CD4-positive, alpha-beta T cell (primary cell): ENCODE measurements at regions of chr4 and their contacts with region 1.

Region 1: GRCh38 chr4:119286377-119287002 is 35.4 kb downstream of the FABP2 start:
- DNase-seq: peak in 10 of 14 experiments; percentile 3 to 74 (median 17)
- ATAC-seq: peak; percentile 55
- H3K4me3 ChIP-seq: no peak overlapping the region
- H3K4me3 Mint-ChIP-seq: no peak overlapping the region
- H3K27ac ChIP-seq: no peak overlapping the region
- H3K27ac Mint-ChIP-seq: no peak overlapping the region
- H3K4me1 ChIP-seq: no peaks in the 10 kb centered on the region
- H3K4me1 Mint-ChIP-seq: peaks cover 30% of the 10 kb centered on the region
- H3K27me3 ChIP-seq: no peaks in the 10 kb centered on the region
- H3K27me3 Mint-ChIP-seq: no peaks in the 10 kb centered on the region
- CTCF ChIP-seq: peak; percentile 76

Region 2: DNA sequence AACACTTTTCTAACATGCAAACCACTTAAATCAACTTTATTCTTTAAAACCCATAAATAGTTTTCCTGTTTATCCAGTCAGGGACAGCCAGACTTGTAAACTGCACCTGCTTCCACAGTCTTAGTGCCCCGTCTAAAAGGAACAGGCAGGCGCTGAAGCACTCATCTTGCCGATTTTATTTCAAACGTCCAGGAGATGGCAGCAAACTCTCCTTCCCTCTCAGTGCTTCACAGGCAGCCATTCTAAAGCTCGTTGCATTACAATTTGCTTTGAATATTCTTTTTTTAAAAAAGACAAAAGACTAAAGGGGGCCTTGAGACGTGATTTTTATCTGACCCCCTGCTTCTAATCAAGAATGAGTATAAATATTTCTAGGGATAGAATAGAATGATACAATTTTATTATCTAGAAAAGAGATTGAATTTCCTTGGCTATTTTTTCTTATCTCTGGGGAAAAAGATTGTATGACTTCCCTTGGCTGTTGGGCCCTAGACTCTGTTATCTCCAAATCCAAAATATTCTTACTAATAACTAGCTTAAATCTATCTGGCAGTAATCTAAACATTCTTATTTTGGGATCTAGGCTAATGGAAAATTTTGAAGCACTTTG is 244.4 kb before region 1 on chr4:
- CTCF ChIA-PET with region 1: no interaction called
- POLR2A ChIA-PET with region 1: no interaction called
- intact Hi-C with region 1: loop called (anchors 1 to 2 kb)
- DNase-seq: peak in 13 of 14 experiments; percentile 4 to 83 (median 37)
- ATAC-seq: peak; percentile 89
- H3K4me3 ChIP-seq: no peak overlapping the region
- H3K4me3 Mint-ChIP-seq: no peak overlapping the region
- H3K27ac ChIP-seq: no peak overlapping the region
- H3K27ac Mint-ChIP-seq: no peak overlapping the region
- H3K4me1 ChIP-seq: no peaks in the 10 kb centered on the region
- H3K4me1 Mint-ChIP-seq: no peaks in the 10 kb centered on the region
- H3K27me3 ChIP-seq: no peaks in the 10 kb centered on the region
- H3K27me3 Mint-ChIP-seq: no peaks in the 10 kb centered on the region
- CTCF ChIP-seq: peak; percentile 83

Region 3: GRCh38 chr4:119268451-119268850 is 18.0 kb before region 1 on chr4:
- CTCF ChIA-PET with region 1: no interaction called
- POLR2A ChIA-PET with region 1: no interaction called
- intact Hi-C with region 1: no loop called
- DNase-seq: no peak
- ATAC-seq: no peak
- H3K4me3 ChIP-seq: no peak overlapping the region
- H3K4me3 Mint-ChIP-seq: no peak overlapping the region
- H3K27ac ChIP-seq: no peak overlapping the region
- H3K27ac Mint-ChIP-seq: no peak overlapping the region
- H3K4me1 ChIP-seq: no peaks in the 10 kb centered on the region
- H3K4me1 Mint-ChIP-seq: no peaks in the 10 kb centered on the region
- H3K27me3 ChIP-seq: no peaks in the 10 kb centered on the region
- H3K27me3 Mint-ChIP-seq: no peaks in the 10 kb centered on the region
- CTCF ChIP-seq: no peak

Region 4: DNA sequence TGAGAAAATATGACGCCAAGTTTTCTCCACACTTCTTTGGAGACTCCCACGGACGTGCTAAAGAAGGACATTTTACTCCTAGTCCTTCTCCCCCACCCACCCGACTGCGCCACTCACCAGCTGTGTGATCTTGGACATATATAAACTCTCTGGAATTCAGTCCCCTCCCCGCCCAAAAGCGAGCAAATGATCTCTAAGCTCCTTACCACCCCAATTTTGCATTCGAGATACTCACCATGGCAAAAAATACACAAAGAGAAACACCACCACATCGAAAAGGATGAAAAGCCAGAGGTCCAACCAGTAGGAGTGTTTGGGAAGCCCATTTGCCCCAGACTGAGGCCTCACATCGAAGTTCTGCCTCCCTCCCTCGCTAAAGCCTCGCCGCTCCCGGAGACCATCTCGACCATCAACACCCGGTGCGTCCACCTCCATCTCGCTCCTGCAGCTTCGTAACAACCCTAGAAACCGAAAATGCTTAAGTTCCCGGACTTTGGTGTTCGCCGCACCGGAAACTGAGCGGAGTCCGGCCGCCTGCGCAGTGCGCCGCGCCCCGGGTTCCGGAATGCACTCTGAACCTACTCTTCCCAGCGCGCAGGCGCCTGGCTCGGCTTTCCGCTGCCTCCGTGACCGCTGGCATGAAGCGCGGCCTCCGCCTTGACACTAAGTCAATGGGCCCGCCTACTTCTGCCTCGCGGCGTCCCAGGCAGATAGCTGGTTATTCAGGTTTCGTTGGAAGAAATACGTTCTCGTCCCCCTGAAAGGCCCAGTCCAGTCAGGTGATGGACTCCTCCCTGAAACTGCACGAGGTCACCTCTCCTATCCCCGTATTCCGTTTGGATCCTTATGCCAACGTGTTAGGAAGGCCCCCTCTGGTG is 13.8 kb after region 1 on chr4:
- CTCF ChIA-PET with region 1: no interaction called
- POLR2A ChIA-PET with region 1: interaction called, 11 read pairs
- intact Hi-C with region 1: no loop called
- DNase-seq: peak; percentile 80 to 95 (median 88)
- ATAC-seq: peak; percentile 93
- H3K4me3 ChIP-seq: peak overlapping the region; percentile 78
- H3K4me3 Mint-ChIP-seq: peak overlapping the region; percentile 99
- H3K27ac ChIP-seq: peak overlapping the region; percentile 85 to 89
- H3K27ac Mint-ChIP-seq: peak overlapping the region; percentile 99
- H3K4me1 ChIP-seq: peaks cover 20% of the 10 kb centered on the region
- H3K4me1 Mint-ChIP-seq: peaks cover 41% of the 10 kb centered on the region
- H3K27me3 ChIP-seq: no peaks in the 10 kb centered on the region
- H3K27me3 Mint-ChIP-seq: peaks cover 8% of the 10 kb centered on the region
- CTCF ChIP-seq: no peak